ENCODE measurements at regions of chr3 and their contacts with region 1.

Region 1: DNA sequence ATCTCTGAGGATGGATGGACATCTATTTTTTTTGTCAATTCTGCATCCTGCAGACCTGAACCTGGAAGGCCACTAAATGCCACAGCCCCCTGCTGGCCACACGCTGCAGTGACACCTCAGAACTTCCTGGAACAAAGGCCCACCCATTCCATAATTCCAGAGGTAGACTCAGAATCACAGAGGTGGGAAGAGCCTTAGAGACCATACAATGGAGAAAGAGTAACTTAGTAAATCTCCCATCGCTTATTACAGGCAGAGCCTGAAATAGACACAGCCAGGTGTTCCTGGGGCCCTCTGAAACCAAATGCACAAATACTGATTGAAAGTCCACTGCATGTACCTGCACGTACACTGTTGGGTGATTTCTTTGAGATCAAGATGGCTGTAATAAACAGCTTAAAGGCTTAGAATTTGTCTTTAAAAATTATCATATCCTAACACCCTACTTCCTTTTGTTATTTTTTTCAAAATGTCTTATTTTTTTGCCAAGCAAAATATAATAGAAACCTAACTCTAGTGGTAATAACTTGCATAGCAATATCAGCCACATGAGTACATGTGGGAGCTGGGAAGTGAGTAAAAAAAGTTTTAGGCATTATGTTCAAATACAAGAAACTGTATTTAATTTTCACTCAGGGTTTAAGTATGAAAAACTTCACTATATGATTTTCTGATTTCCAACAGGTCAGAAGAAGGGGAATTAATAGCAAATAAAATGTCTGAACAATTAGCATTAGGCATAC is 62.7 kb downstream of the EOMES start:
- DNase-seq: peak; percentile 45
- CTCF ChIP-seq: peak; percentile 77

Region 2: DNA sequence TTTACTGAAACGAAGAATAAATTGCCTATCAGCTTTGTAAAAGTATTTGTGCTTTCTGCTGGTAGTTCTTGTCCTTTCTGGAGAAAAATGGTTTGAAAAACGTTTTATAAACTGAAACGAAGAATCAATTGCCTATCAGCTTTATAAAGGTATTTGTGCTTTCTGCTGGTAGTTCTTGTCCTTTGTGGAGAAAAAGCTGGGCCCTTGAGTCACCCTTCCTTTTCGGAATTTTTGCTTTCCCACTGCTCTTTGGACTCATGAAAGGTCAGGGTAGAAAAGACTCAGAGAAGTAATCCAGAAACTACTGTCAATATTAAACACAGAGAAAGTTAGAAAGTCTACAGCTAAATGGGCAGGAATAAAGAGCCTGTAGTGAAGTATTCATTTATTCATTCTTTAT is 10.2 kb before region 1 on chr3:
- CTCF ChIA-PET with region 1: interaction called, 40 read pairs
- POLR2A ChIA-PET with region 1: no interaction called
- DNase-seq: no peak
- CTCF ChIP-seq: no peak

Region 3: GRCh38 chr3:27889745-27890144 is 230.3 kb after region 1 on chr3:
- CTCF ChIA-PET with region 1: no interaction called
- POLR2A ChIA-PET with region 1: no interaction called
- DNase-seq: no peak
- CTCF ChIP-seq: no peak